ENCODE measurements at regions of chr1 and their contacts with region 1.

Region 1: GRCh38 chr1:84506002-84506728 is at the starts of genes GNG5 and SPATA1:
- DNase-seq: peak; percentile 97
- H3K4me3 Mint-ChIP-seq: peak within 1 kb of the TSS; percentile 94
- H3K27ac Mint-ChIP-seq: peak within 1 kb of the TSS; percentile 94
- H3K4me1 Mint-ChIP-seq: peaks cover 25% of the 10 kb centered on the region
- H3K27me3 Mint-ChIP-seq: no peaks in the 10 kb centered on the region
- CTCF ChIP-seq: no peak
- total RNA-seq, gene GNG5: 121 and 122 TPM in 2 replicates
- total RNA-seq, gene SPATA1: 1.0 and 1.2 TPM in 2 replicates

Region 2: GRCh38 chr1:83959824-83960498 is 546.2 kb before region 1 on chr1:
- CTCF ChIA-PET with region 1: no interaction called
- POLR2A ChIA-PET with region 1: no interaction called
- intact Hi-C with region 1: no loop called
- DNase-seq: no peak
- H3K4me3 Mint-ChIP-seq: no peak overlapping the region
- H3K27ac Mint-ChIP-seq: no peak overlapping the region
- H3K4me1 Mint-ChIP-seq: peaks cover 12% of the 10 kb centered on the region
- H3K27me3 Mint-ChIP-seq: no peaks in the 10 kb centered on the region
- CTCF ChIP-seq: no peak

Region 3: DNA sequence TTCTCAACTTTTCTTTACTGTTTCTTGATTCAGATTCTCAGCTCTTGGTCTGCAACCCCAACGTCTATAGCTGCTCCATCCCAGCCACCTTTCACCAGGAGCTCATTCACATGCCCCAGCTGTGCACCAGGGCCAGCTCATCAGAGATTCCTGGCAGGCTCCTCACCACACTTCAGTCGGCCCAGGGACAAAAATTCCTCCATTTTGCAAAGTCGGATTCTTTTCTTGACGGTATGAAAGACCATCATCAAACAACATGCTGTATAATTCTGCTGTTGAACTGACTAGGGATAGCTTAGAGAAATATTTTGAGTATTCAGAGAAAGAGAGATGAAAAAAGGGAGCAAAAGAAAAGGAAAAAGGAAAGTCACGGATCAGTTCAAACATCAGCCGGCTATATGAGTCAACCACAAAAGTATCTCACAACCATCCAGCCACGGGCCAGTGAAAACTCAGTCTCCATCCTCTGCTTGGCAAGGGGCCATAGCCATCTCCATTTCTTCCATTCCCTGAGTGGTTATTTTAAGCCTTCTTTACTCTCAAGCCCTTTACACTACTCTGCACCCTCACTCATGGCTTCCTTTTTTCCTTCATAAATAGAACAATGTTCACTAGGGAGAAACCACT is 93.7 kb before region 1 on chr1:
- CTCF ChIA-PET with region 1: no interaction called
- POLR2A ChIA-PET with region 1: no interaction called
- intact Hi-C with region 1: no loop called
- DNase-seq: peak; percentile 73
- H3K4me3 Mint-ChIP-seq: no peak overlapping the region
- H3K27ac Mint-ChIP-seq: no peak overlapping the region
- H3K4me1 Mint-ChIP-seq: no peaks in the 10 kb centered on the region
- H3K27me3 Mint-ChIP-seq: no peaks in the 10 kb centered on the region
- CTCF ChIP-seq: no peak

Region 4: DNA sequence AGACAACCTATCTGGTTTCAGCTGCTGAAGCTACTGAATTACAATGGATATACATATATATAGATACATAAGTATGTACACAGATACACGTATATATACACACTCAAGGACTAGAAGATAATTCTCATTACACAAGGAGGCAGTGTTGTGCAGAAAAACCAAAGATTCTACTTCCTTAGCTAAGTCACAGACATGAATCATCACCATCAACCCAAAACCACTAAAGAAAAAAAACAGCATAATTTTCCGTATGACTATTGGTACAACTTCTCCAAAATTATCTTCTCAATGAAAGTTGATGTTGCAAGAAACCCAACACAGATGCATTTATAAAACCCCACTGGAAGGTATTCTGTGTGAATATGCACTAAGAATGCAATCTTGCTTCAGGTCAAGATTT is 63.9 kb before region 1 on chr1:
- CTCF ChIA-PET with region 1: interaction called, 4 read pairs
- POLR2A ChIA-PET with region 1: interaction called, 3 read pairs
- intact Hi-C with region 1: loop called (anchors 2 kb)
- DNase-seq: peak; percentile 87
- H3K4me3 Mint-ChIP-seq: no peak overlapping the region
- H3K27ac Mint-ChIP-seq: no peak overlapping the region
- H3K4me1 Mint-ChIP-seq: no peaks in the 10 kb centered on the region
- H3K27me3 Mint-ChIP-seq: no peaks in the 10 kb centered on the region
- CTCF ChIP-seq: peak; percentile 39

Region 5: DNA sequence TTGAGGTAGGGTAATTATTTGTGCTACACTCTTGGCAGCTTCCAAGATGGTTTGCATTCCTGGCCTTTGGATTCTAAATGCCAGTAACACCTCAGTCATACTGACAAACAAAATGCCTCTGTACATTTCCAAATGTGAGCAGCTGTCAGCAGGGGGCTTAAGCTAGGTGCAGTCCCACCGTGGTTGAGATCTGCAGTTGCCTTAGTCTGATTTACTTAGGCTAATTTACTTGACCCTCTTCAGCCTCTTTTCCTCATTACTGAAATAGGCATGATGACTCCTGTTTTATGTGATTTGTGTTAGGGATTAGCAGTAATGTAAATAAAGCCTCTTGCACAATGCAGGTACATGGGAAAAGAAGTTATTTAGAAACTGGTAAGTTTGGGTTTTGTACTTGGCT is 13.4 kb before region 1 on chr1:
- CTCF ChIA-PET with region 1: interaction called, 3 read pairs
- POLR2A ChIA-PET with region 1: interaction called, 33 read pairs
- intact Hi-C with region 1: no loop called
- DNase-seq: no peak
- H3K4me3 Mint-ChIP-seq: no peak overlapping the region
- H3K27ac Mint-ChIP-seq: no peak overlapping the region
- H3K4me1 Mint-ChIP-seq: no peaks in the 10 kb centered on the region
- H3K27me3 Mint-ChIP-seq: no peaks in the 10 kb centered on the region
- CTCF ChIP-seq: no peak

Region 6: GRCh38 chr1:84573967-84574842 is 68.0 kb after region 1 on chr1 and contains the start of gene CTBS:
- CTCF ChIA-PET with region 1: interaction called, 10 read pairs
- POLR2A ChIA-PET with region 1: interaction called, 104 read pairs
- intact Hi-C with region 1: loop called (anchors 1 kb)
- DNase-seq: peak; percentile 79
- H3K4me3 Mint-ChIP-seq: peak within 1 kb of the TSS; percentile 95
- H3K27ac Mint-ChIP-seq: peak within 1 kb of the TSS; percentile 99
- H3K4me1 Mint-ChIP-seq: peaks cover 36% of the 10 kb centered on the region
- H3K27me3 Mint-ChIP-seq: no peaks in the 10 kb centered on the region
- CTCF ChIP-seq: no peak
- total RNA-seq, gene CTBS: 14.0 and 20.9 TPM in 2 replicates

Region 7: GRCh38 chr1:84620720-84621313 is 114.7 kb after region 1 on chr1:
- CTCF ChIA-PET with region 1: interaction called, 5 read pairs
- POLR2A ChIA-PET with region 1: interaction called, 25 read pairs
- intact Hi-C with region 1: loop called (anchors 1 kb)
- DNase-seq: peak; percentile 75
- H3K4me3 Mint-ChIP-seq: peak overlapping the region; percentile 81
- H3K27ac Mint-ChIP-seq: peak overlapping the region; percentile 78
- H3K4me1 Mint-ChIP-seq: peaks cover 12% of the 10 kb centered on the region
- H3K27me3 Mint-ChIP-seq: no peaks in the 10 kb centered on the region
- CTCF ChIP-seq: peak; percentile 97

Region 8: GRCh38 chr1:85502625-85503083 is 996.5 kb after region 1 on chr1:
- CTCF ChIA-PET with region 1: no interaction called
- POLR2A ChIA-PET with region 1: no interaction called
- intact Hi-C with region 1: no loop called
- DNase-seq: peak; percentile 79
- H3K4me3 Mint-ChIP-seq: no peak overlapping the region
- H3K27ac Mint-ChIP-seq: no peak overlapping the region
- H3K4me1 Mint-ChIP-seq: peaks cover 10% of the 10 kb centered on the region
- H3K27me3 Mint-ChIP-seq: no peaks in the 10 kb centered on the region
- CTCF ChIP-seq: peak; percentile 43

Measured in MCF 10A (cell line).